Activated CD4-positive, alpha-beta T cell treated with anti-CD3 and anti-CD28 coated beads for 36 hours (primary cell): ENCODE measurements at regions of chr1 and their contacts with region 1.

Region 1: DNA sequence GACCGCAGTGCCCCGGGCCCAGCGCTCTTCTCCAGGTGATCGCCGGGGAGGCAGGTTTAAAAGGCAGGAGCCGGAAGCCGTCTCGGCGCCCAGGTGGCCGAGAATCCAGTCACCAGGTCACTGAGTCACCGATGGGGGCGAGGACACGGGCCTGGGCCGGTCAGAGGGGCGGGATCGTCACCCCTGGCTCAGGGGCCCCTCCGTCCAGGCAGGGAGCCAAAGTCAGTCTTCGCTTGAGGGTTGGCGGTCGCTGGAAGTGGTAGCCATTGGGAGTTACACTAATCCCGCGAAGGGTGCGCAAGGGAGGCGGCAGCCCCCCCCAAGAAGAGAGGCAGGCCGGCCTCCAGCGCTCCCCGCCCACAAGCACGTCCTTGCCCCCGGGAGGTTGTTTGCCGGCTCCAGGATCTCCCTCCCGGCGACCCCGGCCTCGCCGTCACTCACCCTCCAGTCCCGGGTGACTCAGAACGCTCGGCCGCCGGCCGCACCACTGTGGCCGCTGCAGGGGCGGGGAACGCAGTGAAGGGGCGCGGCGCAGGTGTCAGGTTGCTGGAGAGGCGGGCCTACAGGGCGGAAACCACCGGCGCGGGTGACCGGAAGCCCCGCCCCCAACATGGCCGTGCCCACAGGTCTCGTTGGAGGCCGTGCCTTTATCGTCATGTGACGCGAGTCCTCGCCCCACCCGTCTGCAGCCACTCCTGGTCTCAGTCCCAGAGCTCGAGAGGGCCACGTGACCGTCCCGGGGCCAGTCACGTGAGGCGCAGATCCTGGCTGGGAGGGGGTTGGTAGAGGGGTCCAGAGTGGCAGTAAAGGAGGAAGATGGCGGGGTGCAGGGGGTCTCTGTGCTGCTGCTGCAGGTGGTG is at the starts of genes CLCN6 and MTHFR:
- DNase-seq: peak; percentile 99
- ATAC-seq: peak; percentile 91
- H3K4me3 Mint-ChIP-seq: peak within 1 kb of the TSS; percentile 87
- H3K27ac Mint-ChIP-seq: peak within 1 kb of the TSS; percentile 87
- H3K4me1 Mint-ChIP-seq: peaks cover 57% of the 10 kb centered on the region
- H3K27me3 Mint-ChIP-seq: no peaks in the 10 kb centered on the region
- total RNA-seq, gene CLCN6: 9.4 to 9.5 TPM
- total RNA-seq, gene MTHFR: 11.2 to 11.6 TPM

Region 2: DNA sequence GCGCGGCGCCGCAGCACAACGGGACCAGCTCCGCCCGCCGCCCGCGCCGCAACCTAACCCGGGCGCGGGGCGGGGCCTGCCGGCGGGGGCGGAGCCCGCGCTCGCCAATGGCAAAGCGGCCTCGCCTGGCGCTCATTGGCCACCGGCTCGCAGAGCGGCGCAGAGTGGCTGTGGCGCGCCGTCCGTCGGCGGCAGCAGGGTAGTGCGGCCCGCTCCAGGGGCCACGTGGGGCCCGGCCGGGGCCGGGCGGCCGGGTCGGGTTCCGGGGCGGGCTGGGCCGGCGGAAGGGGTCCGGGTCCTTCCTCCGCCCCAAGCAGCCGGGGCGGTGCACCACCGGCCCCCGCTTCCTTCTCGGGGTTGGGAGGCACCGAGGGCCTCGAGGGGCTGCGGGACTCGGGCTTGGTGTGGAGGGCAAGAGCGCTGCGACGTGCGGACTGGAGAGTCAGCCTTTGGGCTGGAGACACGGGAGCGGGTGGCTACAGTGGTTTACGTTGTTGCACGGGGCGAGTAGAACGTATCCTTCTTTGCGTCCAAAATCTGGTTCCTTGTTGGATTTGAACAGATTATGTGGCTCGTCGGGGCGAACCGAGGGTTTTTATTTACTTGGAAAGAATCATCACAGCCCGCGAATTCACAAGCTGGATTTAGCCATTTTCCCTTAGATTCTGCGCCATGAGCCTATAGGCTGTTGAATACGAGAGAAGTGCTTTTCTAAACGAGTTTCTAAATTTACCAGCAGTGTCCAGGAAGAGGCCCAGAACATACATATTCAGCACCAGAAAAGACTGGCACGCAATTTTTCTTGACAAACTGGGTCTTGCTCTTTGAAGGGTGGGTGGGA is 745.5 kb before region 1 on chr1 and contains the start of gene SRM:
- CTCF ChIA-PET with region 1: no interaction called
- POLR2A ChIA-PET with region 1: no interaction called
- intact Hi-C with region 1: loop called in 1 of 2 experiments (anchors 1 kb)
- DNase-seq: peak; percentile 95
- ATAC-seq: peak; percentile 98
- H3K4me3 Mint-ChIP-seq: peak within 1 kb of the TSS; percentile 93
- H3K27ac Mint-ChIP-seq: peak within 1 kb of the TSS; percentile 94
- H3K4me1 Mint-ChIP-seq: peaks cover 41% of the 10 kb centered on the region
- H3K27me3 Mint-ChIP-seq: no peaks in the 10 kb centered on the region
- total RNA-seq, gene SRM: 180 to 242 TPM

Region 3: GRCh38 chr1:11272832-11273594 is 532.7 kb before region 1 on chr1 and contains the start of gene UBIAD1:
- CTCF ChIA-PET with region 1: no interaction called
- POLR2A ChIA-PET with region 1: no interaction called
- intact Hi-C with region 1: loop called (anchors 1 to 2 kb)
- DNase-seq: peak; percentile 95
- ATAC-seq: peak; percentile 84
- H3K4me3 Mint-ChIP-seq: peak within 1 kb of the TSS; percentile 95
- H3K27ac Mint-ChIP-seq: peak within 1 kb of the TSS; percentile 91
- H3K4me1 Mint-ChIP-seq: peaks cover 29% of the 10 kb centered on the region
- H3K27me3 Mint-ChIP-seq: no peaks in the 10 kb centered on the region
- total RNA-seq, gene UBIAD1: 29.2 to 32.0 TPM

Region 4: GRCh38 chr1:11531314-11531870 is 274.3 kb before region 1 on chr1:
- CTCF ChIA-PET with region 1: no interaction called
- POLR2A ChIA-PET with region 1: no interaction called
- intact Hi-C with region 1: no loop called
- DNase-seq: no peak
- ATAC-seq: no peak
- H3K4me3 Mint-ChIP-seq: no peak overlapping the region
- H3K27ac Mint-ChIP-seq: no peak overlapping the region
- H3K4me1 Mint-ChIP-seq: no peaks in the 10 kb centered on the region
- H3K27me3 Mint-ChIP-seq: no peaks in the 10 kb centered on the region

Region 5: DNA sequence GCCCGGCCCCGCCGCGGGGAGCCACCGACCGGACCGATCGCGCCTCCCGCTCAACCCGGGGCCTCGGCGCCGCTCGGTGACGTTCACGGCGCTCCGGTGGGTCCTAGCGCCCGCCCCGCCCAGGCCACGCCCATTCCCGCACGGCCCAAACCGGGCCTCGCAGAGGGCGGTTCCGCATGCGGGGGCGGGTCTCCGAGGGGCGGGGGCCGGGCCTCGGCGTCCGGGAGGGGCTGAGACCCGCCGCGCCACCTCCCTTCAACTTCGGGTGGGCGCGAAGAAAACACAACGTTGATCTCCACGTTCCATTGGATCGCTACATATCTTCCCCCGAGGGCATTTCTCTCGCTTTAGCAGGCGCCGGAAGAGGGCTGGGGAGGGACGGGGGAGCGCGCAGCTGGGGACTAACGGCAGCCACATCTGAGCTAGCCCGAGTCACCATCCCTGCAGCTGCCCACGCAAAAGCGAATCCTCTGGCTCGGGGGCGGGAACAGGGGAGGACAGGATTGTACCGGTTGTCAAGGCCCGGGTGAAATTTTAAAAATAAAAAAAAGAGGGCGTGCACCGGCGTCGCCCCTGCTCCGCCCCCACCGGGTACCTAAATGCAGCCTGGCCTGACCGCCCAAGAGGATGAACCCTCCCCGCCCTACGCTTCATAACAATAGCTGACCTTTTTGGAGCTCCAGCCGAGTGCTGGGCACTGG is 124.5 kb before region 1 on chr1 and contains the start of gene MAD2L2:
- CTCF ChIA-PET with region 1: no interaction called
- POLR2A ChIA-PET with region 1: interaction called, 3 read pairs
- intact Hi-C with region 1: loop called in 1 of 2 experiments (anchors 1 kb)
- DNase-seq: peak; percentile 96
- ATAC-seq: peak; percentile 85
- H3K4me3 Mint-ChIP-seq: peak within 1 kb of the TSS; percentile 83
- H3K27ac Mint-ChIP-seq: peak within 1 kb of the TSS; percentile 88
- H3K4me1 Mint-ChIP-seq: peaks cover 9% of the 10 kb centered on the region
- H3K27me3 Mint-ChIP-seq: no peaks in the 10 kb centered on the region
- total RNA-seq, gene MAD2L2: 70.4 to 71.5 TPM

Region 6: GRCh38 chr1:11868331-11868955 is 62.8 kb after region 1 on chr1:
- CTCF ChIA-PET with region 1: no interaction called
- POLR2A ChIA-PET with region 1: no interaction called
- intact Hi-C with region 1: no loop called
- DNase-seq: no peak
- ATAC-seq: no peak
- H3K4me3 Mint-ChIP-seq: no peak overlapping the region
- H3K27ac Mint-ChIP-seq: no peak overlapping the region
- H3K4me1 Mint-ChIP-seq: no peaks in the 10 kb centered on the region
- H3K27me3 Mint-ChIP-seq: peaks cover 3% of the 10 kb centered on the region

Region 7: GRCh38 chr1:11934302-11935056 is 128.8 kb after region 1 on chr1 and contains the start of gene PLOD1:
- CTCF ChIA-PET with region 1: no interaction called
- POLR2A ChIA-PET with region 1: no interaction called
- intact Hi-C with region 1: loop called in 1 of 2 experiments (anchors 2 kb)
- DNase-seq: peak; percentile 88
- ATAC-seq: peak; percentile 98
- H3K4me3 Mint-ChIP-seq: peak within 1 kb of the TSS; percentile 75
- H3K27ac Mint-ChIP-seq: no peak within 1 kb of the TSS
- H3K4me1 Mint-ChIP-seq: peaks cover 4% of the 10 kb centered on the region
- H3K27me3 Mint-ChIP-seq: no peaks in the 10 kb centered on the region
- total RNA-seq, gene PLOD1: 11.7 to 11.9 TPM

Region 8: GRCh38 chr1:12166834-12167492 is 361.3 kb after region 1 on chr1 and contains the start of gene TNFRSF1B:
- CTCF ChIA-PET with region 1: no interaction called
- POLR2A ChIA-PET with region 1: no interaction called
- intact Hi-C with region 1: loop called in 1 of 2 experiments (anchors 2 kb)
- DNase-seq: peak; percentile 83
- ATAC-seq: peak; percentile 53
- H3K4me3 Mint-ChIP-seq: peak within 1 kb of the TSS; percentile 98
- H3K27ac Mint-ChIP-seq: peak within 1 kb of the TSS; percentile 99
- H3K4me1 Mint-ChIP-seq: peaks cover 63% of the 10 kb centered on the region
- H3K27me3 Mint-ChIP-seq: no peaks in the 10 kb centered on the region
- total RNA-seq, gene TNFRSF1B: 107 to 116 TPM